Activated naive CD4-positive, alpha-beta T cell treated with anti-CD3 and anti-CD28 coated beads for 36 hours (primary cell): ENCODE measurements at regions of chr12 and their contacts with region 1.

Region 1: GRCh38 chr12:75977952-75978671 is 53.5 kb downstream of the PHLDA1 start:
- DNase-seq: peak; percentile 90
- H3K4me3 Mint-ChIP-seq: peak overlapping the region; percentile 57
- H3K27ac Mint-ChIP-seq: peak overlapping the region; percentile 99
- H3K4me1 Mint-ChIP-seq: peaks cover 60% of the 10 kb centered on the region
- H3K27me3 Mint-ChIP-seq: no peaks in the 10 kb centered on the region

Region 2: DNA sequence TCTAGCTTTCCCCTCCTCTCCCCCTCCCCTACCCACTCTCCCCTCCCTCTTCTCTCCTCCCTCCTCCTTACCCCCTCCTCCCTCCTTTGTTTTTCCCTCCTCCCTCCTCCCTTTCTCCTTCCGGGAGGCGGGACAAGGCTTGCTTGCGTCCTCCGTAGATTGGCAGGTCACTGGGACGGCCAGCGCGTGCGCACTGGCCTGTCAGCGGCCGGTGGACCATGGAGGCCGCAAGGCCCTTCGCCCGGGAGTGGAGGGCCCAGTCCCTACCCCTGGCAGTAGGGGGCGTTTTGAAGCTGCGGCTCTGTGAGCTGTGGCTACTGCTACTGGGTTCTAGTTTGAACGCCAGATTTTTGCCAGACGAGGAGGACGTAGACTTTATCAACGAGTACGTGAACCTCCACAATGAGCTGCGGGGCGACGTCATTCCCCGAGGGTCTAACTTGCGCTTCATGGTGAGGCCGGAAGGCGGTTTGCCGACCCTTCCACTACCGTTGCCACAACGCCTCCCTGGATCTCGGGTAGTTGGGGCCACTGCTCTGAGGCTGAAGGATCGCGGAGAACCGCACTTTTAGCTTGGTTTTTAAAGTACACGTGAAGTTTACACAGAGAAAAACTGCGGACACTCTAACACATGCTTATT is 587.1 kb before region 1 on chr12 and contains the start of gene GLIPR1L2:
- CTCF ChIA-PET with region 1: no interaction called
- intact Hi-C with region 1: loop called (anchors 1 kb)
- DNase-seq: peak; percentile 93
- H3K4me3 Mint-ChIP-seq: peak within 1 kb of the TSS; percentile 87
- H3K27ac Mint-ChIP-seq: peak within 1 kb of the TSS; percentile 89
- H3K4me1 Mint-ChIP-seq: peaks cover 27% of the 10 kb centered on the region
- H3K27me3 Mint-ChIP-seq: no peaks in the 10 kb centered on the region
- total RNA-seq, gene GLIPR1L2: 0.33 to 0.35 TPM

Region 3: GRCh38 chr12:75690296-75690955 is 287.7 kb before region 1 on chr12:
- CTCF ChIA-PET with region 1: no interaction called
- intact Hi-C with region 1: no loop called
- DNase-seq: no peak
- H3K4me3 Mint-ChIP-seq: no peak overlapping the region
- H3K27ac Mint-ChIP-seq: no peak overlapping the region
- H3K4me1 Mint-ChIP-seq: no peaks in the 10 kb centered on the region
- H3K27me3 Mint-ChIP-seq: peaks cover 4% of the 10 kb centered on the region

Region 4: DNA sequence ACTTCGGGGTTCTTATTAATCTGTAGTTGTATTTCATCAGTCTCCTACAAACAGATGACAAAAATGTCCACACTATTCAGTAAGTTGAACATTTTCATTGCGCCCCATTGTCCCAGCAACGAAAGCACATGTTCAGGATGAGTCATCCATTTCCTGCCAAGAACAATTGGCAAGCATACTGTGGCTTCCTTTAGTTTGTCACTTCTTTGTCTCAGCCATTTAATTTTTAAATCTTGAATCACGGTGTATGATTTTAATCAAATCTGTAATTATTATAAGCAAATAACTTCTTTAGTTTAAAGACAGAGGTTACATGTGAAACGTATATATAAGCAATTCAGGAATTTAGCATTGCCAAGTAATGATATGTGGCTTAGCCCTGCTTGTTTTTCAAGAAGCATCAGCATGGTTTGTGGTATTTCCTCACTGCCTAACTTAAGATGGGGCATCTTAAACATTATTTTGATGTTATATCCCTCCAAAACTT is 255.4 kb before region 1 on chr12:
- CTCF ChIA-PET with region 1: no interaction called
- intact Hi-C with region 1: loop called (anchors 1 kb)
- DNase-seq: peak; percentile 64
- H3K4me3 Mint-ChIP-seq: no peak overlapping the region
- H3K27ac Mint-ChIP-seq: peak overlapping the region; percentile 18
- H3K4me1 Mint-ChIP-seq: peaks cover 15% of the 10 kb centered on the region
- H3K27me3 Mint-ChIP-seq: peaks cover 6% of the 10 kb centered on the region

Region 5: GRCh38 chr12:75933101-75933500 is 45.0 kb before region 1 on chr12:
- CTCF ChIA-PET with region 1: no interaction called
- intact Hi-C with region 1: loop called (anchors 1 kb)
- DNase-seq: no peak
- H3K4me3 Mint-ChIP-seq: no peak overlapping the region
- H3K27ac Mint-ChIP-seq: no peak overlapping the region
- H3K4me1 Mint-ChIP-seq: peaks cover 18% of the 10 kb centered on the region
- H3K27me3 Mint-ChIP-seq: peaks cover 15% of the 10 kb centered on the region

Region 6: GRCh38 chr12:76020731-76021672 is 42.9 kb after region 1 on chr12:
- CTCF ChIA-PET with region 1: interaction called, 12 read pairs
- intact Hi-C with region 1: loop called (anchors 1 kb)
- DNase-seq: peak; percentile 91
- H3K4me3 Mint-ChIP-seq: peak overlapping the region; percentile 40
- H3K27ac Mint-ChIP-seq: peak overlapping the region; percentile 95
- H3K4me1 Mint-ChIP-seq: peaks cover 45% of the 10 kb centered on the region
- H3K27me3 Mint-ChIP-seq: no peaks in the 10 kb centered on the region

Region 7: DNA sequence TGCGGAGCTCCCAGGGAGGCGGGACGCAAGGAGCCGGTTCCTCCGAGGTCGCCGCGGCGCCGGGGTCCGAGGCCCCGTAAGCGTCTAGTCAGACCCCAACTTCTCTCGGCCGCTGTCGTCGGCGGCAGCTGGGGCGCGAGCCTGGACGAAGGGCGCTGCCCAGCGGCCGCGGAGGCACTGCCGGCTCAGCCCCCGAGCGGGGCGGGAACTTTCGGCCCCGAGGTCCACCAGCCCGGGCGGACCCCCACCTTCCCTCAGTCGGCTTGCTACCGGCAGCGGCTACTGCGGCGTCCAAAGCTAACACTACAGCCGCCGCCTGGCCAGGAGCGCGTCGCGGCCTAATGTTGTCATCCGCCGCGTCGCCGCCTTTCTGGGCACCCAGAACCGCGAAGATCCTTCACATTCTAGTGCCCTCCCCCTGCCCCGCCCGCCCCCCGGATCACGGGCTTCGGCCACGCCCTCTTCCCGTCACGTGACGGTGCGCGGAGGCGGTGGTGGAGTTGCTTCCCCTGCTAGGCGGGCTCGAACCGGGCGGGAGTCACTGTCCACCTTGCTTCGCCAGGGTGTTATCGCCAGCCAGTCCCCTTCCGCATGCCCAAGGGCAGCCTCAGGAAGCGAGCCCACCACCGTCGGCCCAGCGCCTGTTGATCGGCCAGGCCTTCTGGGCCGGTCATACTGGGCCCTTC is 581.4 kb after region 1 on chr12 and contains the start of gene OSBPL8:
- CTCF ChIA-PET with region 1: no interaction called
- intact Hi-C with region 1: loop called (anchors 1 kb)
- DNase-seq: peak; percentile 96
- H3K4me3 Mint-ChIP-seq: peak within 1 kb of the TSS; percentile 92
- H3K27ac Mint-ChIP-seq: peak within 1 kb of the TSS; percentile 96
- H3K4me1 Mint-ChIP-seq: peaks cover 34% of the 10 kb centered on the region
- H3K27me3 Mint-ChIP-seq: no peaks in the 10 kb centered on the region
- total RNA-seq, gene OSBPL8: 56.8 to 63.7 TPM